Ovary (tissue), 10 donors: ENCODE measurements at regions of chr10 and their contacts with region 1.

Region 1: DNA sequence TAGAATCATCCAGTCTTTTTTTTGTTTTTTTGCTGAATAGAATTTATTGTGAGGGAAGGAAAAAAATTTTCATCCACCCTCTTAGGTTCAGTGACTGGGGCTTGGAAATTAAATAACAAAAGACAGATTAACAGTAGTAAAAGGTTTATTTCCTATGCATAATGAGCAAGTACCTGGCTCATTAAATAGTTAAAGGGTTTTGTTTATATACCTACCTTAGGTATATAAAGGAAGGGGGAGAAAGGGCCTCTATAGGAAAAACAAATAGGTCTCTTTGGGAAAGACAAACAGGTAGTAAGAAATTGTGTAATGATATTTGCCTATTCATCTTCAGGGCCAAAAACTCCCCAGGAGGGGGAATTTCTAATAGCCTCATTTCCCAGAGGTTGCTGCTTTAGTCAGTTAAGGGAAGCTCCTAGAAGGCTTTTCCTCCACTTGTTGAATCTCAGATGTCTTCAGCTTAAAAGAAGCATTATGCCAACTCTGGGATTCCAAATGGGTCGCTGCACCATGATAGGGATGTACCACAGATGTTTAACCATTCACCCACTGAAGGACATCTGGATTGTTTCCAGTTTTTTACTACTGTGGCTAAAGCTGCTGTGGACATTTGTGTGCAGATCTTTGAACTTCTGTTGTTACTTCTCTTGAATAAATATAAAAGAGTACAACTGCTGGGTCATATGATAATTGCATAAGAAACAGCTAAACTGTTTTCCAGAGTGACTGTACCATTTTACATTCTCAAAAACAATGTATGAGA is 11.3 kb downstream of the ACADSB start:
- DNase-seq: no peak
- H3K4me3 ChIP-seq: no peak overlapping the region
- H3K27ac ChIP-seq: no peak overlapping the region
- H3K4me1 ChIP-seq: no peaks in the 10 kb centered on the region
- H3K27me3 ChIP-seq: no peaks in the 10 kb centered on the region
- CTCF ChIP-seq: no peak
- EP300 ChIP-seq: no peak
- POLR2A ChIP-seq: no peak

Region 2: DNA sequence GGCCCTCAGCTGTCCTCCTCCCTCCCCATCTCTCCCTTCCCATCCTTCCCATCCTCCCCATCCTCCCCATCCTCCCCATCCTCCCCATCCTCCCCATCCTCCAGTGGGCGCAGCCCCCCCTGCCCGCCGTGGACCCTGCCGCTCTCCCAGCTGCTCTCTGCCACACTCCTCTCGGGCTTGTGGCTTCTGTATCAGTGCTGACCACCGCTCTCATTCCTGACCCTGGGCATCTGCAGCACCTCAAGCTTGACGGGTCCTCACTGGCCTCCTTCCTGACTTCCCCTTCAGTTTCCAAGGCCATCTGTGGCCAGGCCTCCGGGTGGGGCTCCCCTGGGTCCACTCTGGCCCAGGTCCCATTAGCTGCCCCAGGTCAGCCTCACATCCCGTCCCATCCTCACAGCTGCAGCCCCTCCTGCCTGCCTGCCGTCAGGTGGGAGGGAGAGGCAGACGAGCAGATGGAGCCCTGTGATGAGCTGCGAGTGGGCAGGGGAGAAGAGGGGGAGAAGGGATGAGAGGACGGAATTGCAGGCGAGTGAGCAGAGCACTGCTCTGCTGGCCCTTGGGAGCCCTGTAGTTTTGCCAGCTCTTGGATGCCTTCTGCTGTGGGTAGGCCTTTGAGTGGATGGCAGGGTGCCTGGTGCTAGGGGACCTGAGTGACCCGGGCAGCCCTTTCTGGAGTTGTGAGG is 1477.2 kb after region 1 on chr10:
- intact Hi-C with region 1: loop called in 1 of 4 experiments (anchors 5 kb)
- DNase-seq: no peak
- H3K4me3 ChIP-seq: no peak overlapping the region
- H3K27ac ChIP-seq: no peak overlapping the region
- H3K4me1 ChIP-seq: no peaks in the 10 kb centered on the region
- H3K27me3 ChIP-seq: no peaks in the 10 kb centered on the region
- CTCF ChIP-seq: no peak
- EP300 ChIP-seq: no peak
- POLR2A ChIP-seq: no peak